Heart left ventricle (tissue), 16 donors: ENCODE measurements at regions of chr14 and their contacts with region 1.

Region 1: DNA sequence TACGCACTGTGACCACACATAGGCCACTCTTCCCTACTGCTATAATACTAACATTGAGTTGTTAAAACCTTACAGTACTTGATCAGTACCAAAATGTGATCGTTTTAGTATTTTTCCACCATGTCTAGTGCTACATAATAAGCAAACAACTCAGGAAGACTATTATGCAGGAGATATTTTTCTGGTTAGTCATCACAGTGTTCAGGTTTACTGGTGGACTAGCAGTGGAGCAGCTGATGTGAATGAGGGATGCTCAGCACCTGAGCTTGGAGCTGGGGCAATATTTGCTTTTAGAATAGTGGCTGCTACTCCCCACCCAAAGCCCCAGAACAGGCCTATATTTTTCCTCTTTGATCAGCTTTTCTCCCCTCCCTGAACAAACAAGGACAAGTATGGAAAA is 513.1 kb downstream of the KCNH5 start:
- DNase-seq: no peak
- ATAC-seq: no peak
- H3K4me3 ChIP-seq: no peak overlapping the region
- H3K27ac ChIP-seq: no peak overlapping the region
- H3K4me1 ChIP-seq: no peaks in the 10 kb centered on the region
- H3K27me3 ChIP-seq: no peaks in the 10 kb centered on the region
- CTCF ChIP-seq: no peak
- POLR2A ChIP-seq: no peak

Region 2: GRCh38 chr14:62029569-62029924 is 502.6 kb before region 1 on chr14:
- intact Hi-C with region 1: no loop called
- DNase-seq: no peak
- ATAC-seq: no peak
- H3K4me3 ChIP-seq: no peak overlapping the region
- H3K27ac ChIP-seq: no peak overlapping the region
- H3K4me1 ChIP-seq: no peaks in the 10 kb centered on the region
- H3K27me3 ChIP-seq: peaks cover 0 to 8% (median 0%) of the 10 kb centered on the region in 9 donors
- CTCF ChIP-seq: no peak
- POLR2A ChIP-seq: no peak

Region 3: DNA sequence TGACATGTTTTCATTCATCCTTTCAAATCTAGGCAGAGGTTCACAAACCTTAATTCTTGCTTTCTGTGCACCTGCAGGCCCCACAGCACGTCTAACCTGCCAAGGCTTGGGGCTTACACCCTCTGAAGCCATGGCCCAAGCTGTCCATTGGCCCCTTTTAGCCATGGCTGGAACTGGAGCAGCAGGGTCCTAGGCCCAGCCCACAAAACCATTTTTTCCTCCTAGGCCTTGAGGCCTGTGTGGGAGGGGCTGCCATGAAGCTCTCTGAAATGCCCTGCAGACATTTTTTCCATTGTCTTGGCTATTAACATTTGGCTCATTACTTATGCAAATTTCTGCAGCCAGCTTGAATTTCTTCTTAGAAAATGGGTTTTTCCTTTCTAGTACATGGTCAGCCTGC is 34.5 kb before region 1 on chr14:
- intact Hi-C with region 1: loop called in 1 of 10 experiments (anchors 2 kb)
- DNase-seq: no peak
- ATAC-seq: no peak
- H3K4me3 ChIP-seq: no peak overlapping the region
- H3K27ac ChIP-seq: no peak overlapping the region
- H3K4me1 ChIP-seq: no peaks in the 10 kb centered on the region
- H3K27me3 ChIP-seq: no peaks in the 10 kb centered on the region
- CTCF ChIP-seq: no peak
- POLR2A ChIP-seq: no peak

Region 4: DNA sequence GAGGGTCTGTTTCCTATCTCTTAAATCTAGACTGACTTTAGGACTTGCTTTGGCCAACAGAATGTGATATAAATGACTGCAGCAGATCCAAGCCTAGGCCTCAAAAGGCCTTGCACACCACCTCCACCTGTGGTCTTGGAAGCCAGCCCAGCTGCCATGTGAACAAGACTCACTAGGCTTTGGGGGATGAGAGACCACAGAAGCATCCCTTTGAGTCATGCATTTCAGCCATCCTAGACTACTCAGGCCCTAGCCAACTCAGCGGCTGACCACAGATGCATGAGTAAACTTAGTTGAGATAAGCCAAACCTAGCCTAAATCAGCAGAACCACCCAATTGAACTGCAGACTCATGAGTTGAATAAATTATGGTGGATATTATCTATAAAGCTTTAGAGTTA is 425.4 kb after region 1 on chr14:
- intact Hi-C with region 1: no loop called
- DNase-seq: no peak
- ATAC-seq: no peak
- H3K4me3 ChIP-seq: no peak overlapping the region
- H3K27ac ChIP-seq: no peak overlapping the region
- H3K4me1 ChIP-seq: no peaks in the 10 kb centered on the region
- H3K27me3 ChIP-seq: no peaks in the 10 kb centered on the region
- CTCF ChIP-seq: no peak
- POLR2A ChIP-seq: no peak

Region 5: DNA sequence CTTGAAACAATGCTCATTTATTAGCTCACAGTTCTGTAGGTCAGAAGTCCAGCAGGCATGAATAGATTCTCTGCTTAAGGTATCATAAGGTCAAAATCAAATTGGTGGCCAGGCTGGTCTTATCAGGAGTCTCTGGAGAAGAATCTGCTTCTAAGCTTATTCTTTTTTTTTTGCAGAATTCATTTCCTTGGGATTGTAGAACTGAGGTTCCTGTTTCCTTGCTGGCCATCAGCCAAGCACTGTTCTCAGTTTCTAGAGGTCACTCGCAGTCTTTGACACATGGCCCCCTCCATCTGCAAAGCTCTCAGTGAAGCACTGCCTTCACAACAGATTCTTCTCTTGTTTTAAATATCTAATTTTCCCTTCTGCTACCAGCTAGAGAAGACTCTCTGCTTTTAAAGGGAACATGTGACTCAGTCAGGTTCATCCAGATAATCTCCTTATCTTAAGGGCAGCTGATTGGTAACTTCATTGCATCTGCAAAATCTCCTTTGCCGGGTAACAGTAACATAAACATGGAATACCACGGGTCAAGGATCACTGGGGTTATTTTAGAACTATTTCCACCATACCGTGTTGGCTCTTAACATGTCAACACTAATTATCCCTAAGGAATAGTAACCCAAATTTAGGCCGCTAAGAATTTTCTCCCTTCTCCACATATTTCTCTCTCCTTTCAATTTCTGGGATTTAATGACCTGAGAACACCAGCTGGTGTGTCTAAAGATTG is 697.3 kb after region 1 on chr14:
- intact Hi-C with region 1: no loop called
- DNase-seq: peak in 4 of 5 donors; percentile 47 to 68 (median 55)
- ATAC-seq: peak in 2 of 4 donors; percentile 47 to 49
- H3K4me3 ChIP-seq: no peak overlapping the region
- H3K27ac ChIP-seq: peak overlapping the region in 3 of 12 donors; percentile 10 to 26 (median 20)
- H3K4me1 ChIP-seq: peaks cover 0 to 28% (median 5%) of the 10 kb centered on the region in 12 donors
- H3K27me3 ChIP-seq: no peaks in the 10 kb centered on the region
- CTCF ChIP-seq: no peak
- POLR2A ChIP-seq: no peak